CD4-positive, alpha-beta memory T cell (primary cell): ENCODE measurements at regions of chr7 and their contacts with region 1.

Region 1: GRCh38 chr7:23055582-23056178 is 41.8 kb upstream of the HYCC1 start:
- DNase-seq: peak; percentile 61 to 68 (median 66)
- H3K4me3 ChIP-seq: no peak overlapping the region
- H3K4me3 Mint-ChIP-seq: no peak overlapping the region
- H3K27ac ChIP-seq: no peak overlapping the region
- H3K27ac Mint-ChIP-seq: no peak overlapping the region
- H3K4me1 ChIP-seq: no peaks in the 10 kb centered on the region
- H3K4me1 Mint-ChIP-seq: peaks cover 0 to 2% (median 0%) of the 10 kb centered on the region in 4 donors
- H3K27me3 ChIP-seq: no peaks in the 10 kb centered on the region
- H3K27me3 Mint-ChIP-seq: peaks cover 1 to 2% of the 10 kb centered on the region in 2 donors

Region 2: GRCh38 chr7:22559829-22560489 is 495.7 kb before region 1 on chr7:
- CTCF ChIA-PET with region 1: interaction called, 111 read pairs
- POLR2A ChIA-PET with region 1: no interaction called
- intact Hi-C with region 1: loop called (anchors 1 kb)
- DNase-seq: peak; percentile 63 to 72 (median 68)
- H3K4me3 ChIP-seq: no peak overlapping the region
- H3K4me3 Mint-ChIP-seq: no peak overlapping the region
- H3K27ac ChIP-seq: no peak overlapping the region
- H3K27ac Mint-ChIP-seq: no peak overlapping the region
- H3K4me1 ChIP-seq: peaks cover 35% of the 10 kb centered on the region
- H3K4me1 Mint-ChIP-seq: peaks cover 20 to 39% (median 28%) of the 10 kb centered on the region in 4 donors
- H3K27me3 ChIP-seq: no peaks in the 10 kb centered on the region
- H3K27me3 Mint-ChIP-seq: peaks cover 4 to 9% of the 10 kb centered on the region in 2 donors

Region 3: DNA sequence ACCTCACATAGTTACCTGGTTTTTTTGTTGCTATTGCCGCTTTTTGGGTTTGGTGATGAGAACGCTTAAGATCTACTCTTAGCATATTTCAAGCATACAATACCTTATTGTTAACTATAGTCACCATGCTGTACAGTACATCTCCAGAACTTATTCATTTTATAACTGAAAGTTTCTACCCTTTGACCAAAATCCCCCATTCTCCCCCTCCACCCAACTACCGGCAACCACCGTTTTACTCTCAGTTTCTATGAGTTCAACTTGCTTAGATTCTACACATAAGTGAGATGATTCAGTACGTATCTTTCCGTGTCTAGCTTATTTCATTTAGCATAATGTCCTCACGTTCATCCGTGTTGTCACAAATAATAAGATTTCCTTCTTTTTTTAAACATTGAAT is 415.4 kb before region 1 on chr7:
- CTCF ChIA-PET with region 1: no interaction called
- POLR2A ChIA-PET with region 1: no interaction called
- intact Hi-C with region 1: no loop called
- DNase-seq: no peak
- H3K4me3 ChIP-seq: no peak overlapping the region
- H3K4me3 Mint-ChIP-seq: peak overlapping the region in 5 of 8 donors; percentile 5 to 59 (median 22)
- H3K27ac ChIP-seq: no peak overlapping the region
- H3K27ac Mint-ChIP-seq: no peak overlapping the region
- H3K4me1 ChIP-seq: no peaks in the 10 kb centered on the region
- H3K4me1 Mint-ChIP-seq: peaks cover 0 to 4% (median 2%) of the 10 kb centered on the region in 4 donors
- H3K27me3 ChIP-seq: no peaks in the 10 kb centered on the region
- H3K27me3 Mint-ChIP-seq: peaks cover 0 to 7% of the 10 kb centered on the region in 2 donors

Region 4: GRCh38 chr7:22822486-22823141 is 233.1 kb before region 1 on chr7 and contains the start of gene TOMM7:
- CTCF ChIA-PET with region 1: interaction called, 16 read pairs
- POLR2A ChIA-PET with region 1: interaction called, 4 read pairs
- intact Hi-C with region 1: loop called (anchors 1 kb)
- DNase-seq: peak; percentile 84 to 92 (median 91)
- H3K4me3 ChIP-seq: peak within 1 kb of the TSS; percentile 83 to 98
- H3K4me3 Mint-ChIP-seq: peak within 1 kb of the TSS; percentile 94 to 99 (median 98)
- H3K27ac ChIP-seq: peak within 1 kb of the TSS; percentile 85
- H3K27ac Mint-ChIP-seq: peak within 1 kb of the TSS; percentile 94 to 100 (median 98)
- H3K4me1 ChIP-seq: peaks cover 40% of the 10 kb centered on the region
- H3K4me1 Mint-ChIP-seq: peaks cover 19 to 50% (median 33%) of the 10 kb centered on the region in 4 donors
- H3K27me3 ChIP-seq: no peaks in the 10 kb centered on the region
- H3K27me3 Mint-ChIP-seq: peaks cover 5 to 17% of the 10 kb centered on the region in 2 donors
- total RNA-seq, gene TOMM7: 686 to 701 TPM

Region 5: DNA sequence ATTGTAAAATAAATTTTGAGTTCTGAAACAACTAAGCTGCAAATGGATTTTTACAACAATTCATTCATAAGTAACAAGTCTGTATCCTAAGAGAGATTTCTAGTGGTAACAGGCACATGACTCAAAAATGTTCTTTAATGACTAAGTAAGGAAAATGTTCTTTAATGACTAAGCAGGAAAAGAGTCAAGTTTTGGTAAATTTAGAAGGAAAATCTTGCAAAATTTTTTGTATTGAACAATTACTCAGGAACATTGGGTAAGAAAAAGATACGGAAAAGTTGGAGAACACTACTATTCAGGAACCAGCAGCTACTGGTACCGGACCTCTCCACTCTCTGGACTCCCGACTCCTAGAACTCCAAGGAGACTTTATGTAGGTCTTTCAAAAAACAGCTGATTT is 75.3 kb before region 1 on chr7:
- CTCF ChIA-PET with region 1: interaction called, 10 read pairs
- POLR2A ChIA-PET with region 1: no interaction called
- intact Hi-C with region 1: no loop called
- DNase-seq: no peak
- H3K4me3 ChIP-seq: no peak overlapping the region
- H3K4me3 Mint-ChIP-seq: no peak overlapping the region
- H3K27ac ChIP-seq: no peak overlapping the region
- H3K27ac Mint-ChIP-seq: no peak overlapping the region
- H3K4me1 ChIP-seq: no peaks in the 10 kb centered on the region
- H3K4me1 Mint-ChIP-seq: no peaks in the 10 kb centered on the region
- H3K27me3 ChIP-seq: no peaks in the 10 kb centered on the region
- H3K27me3 Mint-ChIP-seq: no peaks in the 10 kb centered on the region

Region 6: DNA sequence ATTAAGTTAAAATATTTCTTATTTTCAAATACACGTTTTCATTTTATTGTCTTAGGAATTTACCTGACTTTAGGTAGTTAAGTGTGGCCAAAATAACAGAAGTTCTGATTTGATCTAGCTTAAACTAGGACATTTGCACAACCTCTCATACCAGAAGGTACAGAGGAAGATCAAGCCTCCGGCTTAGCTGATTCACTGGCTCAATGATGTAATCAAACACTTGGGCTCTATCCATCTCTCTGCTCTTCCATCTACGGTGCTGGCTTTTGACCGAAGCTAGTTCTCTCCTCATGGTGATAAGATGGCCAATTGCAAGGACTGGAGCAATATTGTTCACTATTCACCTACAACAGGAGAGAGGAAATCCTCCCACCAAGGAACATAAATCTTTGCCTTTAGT is 29.5 kb before region 1 on chr7:
- CTCF ChIA-PET with region 1: interaction called, 10 read pairs
- POLR2A ChIA-PET with region 1: no interaction called
- intact Hi-C with region 1: no loop called
- DNase-seq: no peak
- H3K4me3 ChIP-seq: no peak overlapping the region
- H3K4me3 Mint-ChIP-seq: no peak overlapping the region
- H3K27ac ChIP-seq: no peak overlapping the region
- H3K27ac Mint-ChIP-seq: no peak overlapping the region
- H3K4me1 ChIP-seq: peaks cover 2% of the 10 kb centered on the region
- H3K4me1 Mint-ChIP-seq: peaks cover under 1 to 7% (median 5%) of the 10 kb centered on the region in 4 donors
- H3K27me3 ChIP-seq: no peaks in the 10 kb centered on the region
- H3K27me3 Mint-ChIP-seq: no peaks in the 10 kb centered on the region

Region 7: DNA sequence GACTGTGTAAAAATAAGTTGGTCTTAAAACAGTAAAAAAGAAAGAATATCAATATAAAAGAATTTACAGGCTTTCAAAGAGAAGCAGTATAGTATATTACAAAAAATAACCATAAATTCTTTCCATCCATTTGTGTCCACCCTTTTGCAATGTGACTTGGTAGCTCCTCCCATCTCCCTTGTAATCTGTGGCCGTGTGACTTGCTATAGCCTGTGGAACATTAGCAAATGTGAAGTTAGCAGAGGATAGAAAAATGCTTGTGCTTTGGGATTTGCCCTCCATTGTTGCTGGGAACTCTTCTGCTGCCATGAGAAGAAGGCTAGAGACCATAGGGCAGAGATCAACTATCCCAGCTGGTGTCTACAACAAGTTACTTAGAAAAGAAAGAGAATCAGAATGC is 80.1 kb after region 1 on chr7:
- CTCF ChIA-PET with region 1: no interaction called
- POLR2A ChIA-PET with region 1: no interaction called
- intact Hi-C with region 1: no loop called
- DNase-seq: no peak
- H3K4me3 ChIP-seq: no peak overlapping the region
- H3K4me3 Mint-ChIP-seq: no peak overlapping the region
- H3K27ac ChIP-seq: no peak overlapping the region
- H3K27ac Mint-ChIP-seq: no peak overlapping the region
- H3K4me1 ChIP-seq: no peaks in the 10 kb centered on the region
- H3K4me1 Mint-ChIP-seq: no peaks in the 10 kb centered on the region
- H3K27me3 ChIP-seq: no peaks in the 10 kb centered on the region
- H3K27me3 Mint-ChIP-seq: no peaks in the 10 kb centered on the region